PC-3 (cell line): ENCODE measurements at regions of chr12 and their contacts with region 1.

Region 1: GRCh38 chr12:116015525-116015924 is 262.0 kb downstream of the MED13L start:
- DNase-seq: peak; percentile 74
- ATAC-seq: peak; percentile 89
- H3K4me3 ChIP-seq: no peak overlapping the region
- H3K27ac ChIP-seq: no peak overlapping the region
- H3K4me1 ChIP-seq: peaks cover 8% of the 10 kb centered on the region
- H3K27me3 ChIP-seq: no peaks in the 10 kb centered on the region
- CTCF ChIP-seq: peak; percentile 87

Region 2: DNA sequence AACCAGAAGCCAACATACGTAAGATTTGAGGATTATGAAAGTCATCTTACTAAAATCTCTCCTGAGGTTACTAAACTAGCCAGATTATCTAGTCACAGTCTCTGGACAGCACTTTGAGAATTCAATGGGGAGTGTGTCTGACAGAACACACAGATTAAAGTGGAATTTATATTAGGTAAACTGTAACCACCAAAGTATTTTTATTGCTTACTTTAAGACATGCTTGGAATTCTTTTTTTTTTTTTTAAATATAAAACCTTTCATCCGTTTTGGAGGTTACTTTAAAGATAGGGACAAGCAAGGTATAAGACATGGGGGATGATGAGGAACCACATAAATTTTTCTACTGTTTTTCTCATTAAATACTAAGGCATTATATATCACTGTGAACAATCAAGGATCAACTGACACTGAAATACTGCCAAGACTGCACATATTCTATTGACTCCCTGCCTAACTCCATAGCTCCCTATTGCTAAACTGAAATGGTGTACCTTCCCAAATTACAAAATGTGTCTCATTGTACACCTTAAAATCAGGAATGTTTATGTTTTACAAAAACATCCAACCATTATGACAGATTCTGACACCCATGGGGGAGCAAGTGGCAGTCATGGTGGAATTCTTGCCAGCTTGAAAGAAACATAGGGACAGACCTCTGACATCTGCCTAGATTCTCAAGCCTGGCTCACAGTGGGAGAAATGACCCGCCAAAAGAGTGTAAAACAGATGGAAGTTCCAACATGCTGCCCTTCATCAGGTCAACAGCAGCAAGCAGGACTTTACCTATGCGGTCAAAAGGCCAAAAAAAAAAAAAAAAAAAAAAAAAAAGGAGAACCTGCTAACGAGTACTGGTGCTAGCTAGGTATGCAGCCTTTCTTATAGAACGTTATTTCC is 22.7 kb after region 1 on chr12:
- CTCF ChIA-PET with region 1: no interaction called
- POLR2A ChIA-PET with region 1: no interaction called
- intact Hi-C with region 1: loop called (anchors 1 kb)
- DNase-seq: peak; percentile 95
- ATAC-seq: peak; percentile 91
- H3K4me3 ChIP-seq: peak overlapping the region; percentile 6; the same call in 1 of the 2 replicates
- H3K27ac ChIP-seq: peak overlapping the region; percentile 70
- H3K4me1 ChIP-seq: peaks cover 53% of the 10 kb centered on the region
- H3K27me3 ChIP-seq: no peaks in the 10 kb centered on the region
- CTCF ChIP-seq: no peak

Region 3: GRCh38 chr12:116053479-116054200 is 38.1 kb after region 1 on chr12:
- CTCF ChIA-PET with region 1: no interaction called
- POLR2A ChIA-PET with region 1: no interaction called
- intact Hi-C with region 1: loop called (anchors 5 kb)
- DNase-seq: peak; percentile 27
- ATAC-seq: peak; percentile 31; the same call in 1 of the 2 replicates
- H3K4me3 ChIP-seq: no peak overlapping the region
- H3K27ac ChIP-seq: no peak overlapping the region
- H3K4me1 ChIP-seq: peaks cover 14% of the 10 kb centered on the region
- H3K27me3 ChIP-seq: no peaks in the 10 kb centered on the region
- CTCF ChIP-seq: no peak

Region 4: DNA sequence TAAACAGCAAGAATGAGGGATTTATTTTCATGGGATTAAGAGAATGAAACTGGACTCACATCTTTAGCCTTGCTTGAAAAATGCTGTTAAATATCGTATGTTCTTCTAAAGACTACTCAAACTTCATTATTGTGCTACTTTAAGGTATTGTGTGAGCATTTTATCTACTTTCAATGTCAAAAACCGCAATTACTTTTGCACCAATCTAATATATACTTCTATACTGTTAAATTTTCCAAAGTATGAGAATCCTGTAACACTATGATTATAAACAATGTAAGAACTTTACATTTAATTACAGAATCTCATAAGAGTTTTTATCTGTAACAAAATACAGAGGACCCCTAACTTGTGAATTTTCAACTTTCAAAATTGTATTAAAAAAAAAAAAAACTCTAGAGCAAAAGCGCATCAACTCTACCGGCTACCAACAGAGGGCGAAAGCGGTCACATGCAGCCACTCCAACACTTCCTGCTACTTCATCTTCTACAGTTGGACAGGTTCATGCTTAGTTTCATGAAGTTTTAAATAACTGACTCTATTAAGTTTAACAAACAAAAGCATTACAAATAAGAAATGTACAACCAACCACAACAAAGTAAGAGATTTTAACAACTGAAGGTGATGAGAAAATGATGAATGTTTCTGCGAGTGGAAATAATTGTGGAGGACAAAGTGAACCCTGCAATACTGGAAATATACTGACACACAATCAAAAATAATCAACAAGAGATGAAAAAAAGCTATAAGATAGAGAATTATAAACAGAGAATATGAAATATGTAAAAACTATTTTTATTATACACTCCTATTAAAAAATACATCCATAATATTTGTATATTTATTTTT is 51.1 kb after region 1 on chr12:
- CTCF ChIA-PET with region 1: no interaction called
- POLR2A ChIA-PET with region 1: no interaction called
- intact Hi-C with region 1: loop called (anchors 1 kb)
- DNase-seq: peak; percentile 66
- ATAC-seq: peak; percentile 61
- H3K4me3 ChIP-seq: no peak overlapping the region
- H3K27ac ChIP-seq: no peak overlapping the region
- H3K4me1 ChIP-seq: peaks cover 6% of the 10 kb centered on the region
- H3K27me3 ChIP-seq: no peaks in the 10 kb centered on the region
- CTCF ChIP-seq: peak; percentile 98